WTC11 (cell line): ENCODE measurements at regions of chr19 and their contacts with region 1.

Region 1: GRCh38 chr19:13978347-13978733 is 26.0 kb downstream of the DCAF15 start:
- DNase-seq: peak; percentile 99
- ATAC-seq: peak; percentile 93
- H3K4me3 Mint-ChIP-seq: peak overlapping the region; percentile 49
- H3K27ac Mint-ChIP-seq: peak overlapping the region; percentile 27; the same call in 1 of the 2 replicates
- H3K4me1 Mint-ChIP-seq: peaks cover 22% of the 10 kb centered on the region
- H3K27me3 Mint-ChIP-seq: no peaks in the 10 kb centered on the region; the same call in 1 of the 2 replicates
- CTCF ChIP-seq: no peak

Region 2: DNA sequence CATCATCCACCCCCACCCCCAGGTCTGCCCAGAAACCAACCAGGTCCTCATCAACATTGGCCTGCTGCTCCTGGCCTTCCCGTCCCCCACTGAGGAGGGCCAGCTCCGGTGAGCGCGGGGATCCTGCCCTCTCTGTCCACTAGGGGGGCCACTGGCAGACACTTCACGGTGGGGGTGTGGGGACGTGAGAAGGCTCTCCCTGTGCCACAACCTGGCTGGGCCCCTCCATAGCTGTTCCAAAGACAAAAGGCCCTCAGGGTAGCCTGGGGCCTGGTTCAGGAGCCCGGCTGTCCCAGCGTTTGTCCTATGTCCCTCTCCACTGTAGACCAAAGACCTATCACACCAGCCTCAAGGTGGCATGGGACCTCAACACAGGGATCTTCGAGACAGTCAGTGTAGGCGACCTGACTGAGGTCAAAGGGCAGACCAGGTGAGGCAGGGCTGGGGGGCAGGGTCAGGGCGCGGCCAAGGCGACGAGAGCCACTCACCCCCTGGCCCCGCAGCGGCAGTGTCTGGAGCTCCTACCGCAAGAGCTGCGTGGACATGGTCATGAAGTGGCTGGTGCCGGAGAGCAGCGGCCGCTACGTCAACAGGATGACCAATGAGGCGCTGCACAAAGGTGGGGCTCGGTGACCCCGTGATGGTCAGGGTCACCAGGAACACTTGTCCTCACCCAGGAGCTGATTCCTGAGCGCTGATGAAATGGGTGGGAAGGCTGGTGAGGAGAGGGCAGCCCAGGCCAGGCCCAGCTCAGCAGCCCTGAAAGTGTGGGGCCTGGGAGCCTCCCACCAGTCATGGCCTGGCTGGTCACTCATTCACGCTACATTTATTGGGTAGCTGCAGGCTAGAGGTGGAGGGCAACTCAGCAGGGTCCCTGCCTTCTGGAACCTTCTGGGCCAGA is 18.1 kb before region 1 on chr19:
- CTCF ChIA-PET with region 1: interaction called, 16 read pairs
- POLR2A ChIA-PET with region 1: interaction called, 16 read pairs
- DNase-seq: peak; percentile 61
- ATAC-seq: peak; percentile 9
- H3K4me3 Mint-ChIP-seq: no peak overlapping the region
- H3K27ac Mint-ChIP-seq: peak overlapping the region; percentile 87
- H3K4me1 Mint-ChIP-seq: peaks cover 6% of the 10 kb centered on the region
- H3K27me3 Mint-ChIP-seq: peaks cover 3% of the 10 kb centered on the region
- CTCF ChIP-seq: peak; percentile 8; the same call in 1 of the 2 replicates

Region 3: GRCh38 chr19:14006243-14006765 is 28.0 kb after region 1 on chr19 and contains the start of gene RFX1:
- CTCF ChIA-PET with region 1: interaction called, 12 read pairs
- POLR2A ChIA-PET with region 1: interaction called, 11 read pairs
- DNase-seq: peak; percentile 100
- ATAC-seq: peak; percentile 85
- H3K4me3 Mint-ChIP-seq: peak within 1 kb of the TSS; percentile 92
- H3K27ac Mint-ChIP-seq: peak within 1 kb of the TSS; percentile 100
- H3K4me1 Mint-ChIP-seq: peaks cover 19% of the 10 kb centered on the region
- H3K27me3 Mint-ChIP-seq: peaks cover 4% of the 10 kb centered on the region
- CTCF ChIP-seq: no peak
- total RNA-seq, gene RFX1: 20.4 to 23.2 TPM (median 21.4 TPM) in 3 replicates